Psoas muscle (tissue), 8 donors: ENCODE measurements at regions of chr3 and their contacts with region 1.

Region 1: GRCh38 chr3:125594581-125595011 is 701 bp downstream of the OSBPL11 start:
- DNase-seq: peak in 1 of 2 donors; percentile 28
- ATAC-seq: peak in 3 of 4 donors; percentile 16 to 37 (median 20)
- H3K4me3 ChIP-seq: peak overlapping the region; percentile 95
- H3K27ac ChIP-seq: peak overlapping the region; percentile 95
- H3K4me1 ChIP-seq: peaks cover 49% of the 10 kb centered on the region
- H3K27me3 ChIP-seq: no peaks in the 10 kb centered on the region
- CTCF ChIP-seq: no peak

Region 2: GRCh38 chr3:125622381-125622788 is 27.8 kb after region 1 on chr3:
- intact Hi-C with region 1: loop called in 1 of 2 experiments (anchors 2 kb)
- DNase-seq: peak; percentile 69 to 89
- ATAC-seq: peak; percentile 90 to 96 (median 92)
- H3K4me3 ChIP-seq: peak overlapping the region; percentile 16
- H3K27ac ChIP-seq: peak overlapping the region; percentile 84
- H3K4me1 ChIP-seq: peaks cover 15% of the 10 kb centered on the region
- H3K27me3 ChIP-seq: no peaks in the 10 kb centered on the region
- CTCF ChIP-seq: no peak